Heart right ventricle (tissue), 16 donors: ENCODE measurements at regions of chr2 and their contacts with region 1.

Region 1: GRCh38 chr2:157876066-157876787 is at the start of gene ACVR1:
- DNase-seq: peak; percentile 95 to 97
- ATAC-seq: peak; percentile 94 to 98 (median 97)
- H3K4me3 ChIP-seq: peak within 1 kb of the TSS; percentile 51 to 92 (median 85)
- H3K27ac ChIP-seq: peak within 1 kb of the TSS; percentile 89 to 98 (median 96)
- H3K4me1 ChIP-seq: peaks cover 2 to 47% (median 25%) of the 10 kb centered on the region in 9 donors
- H3K27me3 ChIP-seq: no peaks in the 10 kb centered on the region
- CTCF ChIP-seq: peak in 8 of 9 donors; percentile 28 to 63 (median 47)
- total RNA-seq, gene ACVR1: 15.6 to 32.7 (median 23.0) TPM

Region 2: GRCh38 chr2:157269922-157270321 is 606.3 kb before region 1 on chr2:
- intact Hi-C with region 1: no loop called
- DNase-seq: no peak
- ATAC-seq: no peak
- H3K4me3 ChIP-seq: no peak overlapping the region
- H3K27ac ChIP-seq: no peak overlapping the region
- H3K4me1 ChIP-seq: no peaks in the 10 kb centered on the region
- H3K27me3 ChIP-seq: no peaks in the 10 kb centered on the region
- CTCF ChIP-seq: no peak

Region 3: DNA sequence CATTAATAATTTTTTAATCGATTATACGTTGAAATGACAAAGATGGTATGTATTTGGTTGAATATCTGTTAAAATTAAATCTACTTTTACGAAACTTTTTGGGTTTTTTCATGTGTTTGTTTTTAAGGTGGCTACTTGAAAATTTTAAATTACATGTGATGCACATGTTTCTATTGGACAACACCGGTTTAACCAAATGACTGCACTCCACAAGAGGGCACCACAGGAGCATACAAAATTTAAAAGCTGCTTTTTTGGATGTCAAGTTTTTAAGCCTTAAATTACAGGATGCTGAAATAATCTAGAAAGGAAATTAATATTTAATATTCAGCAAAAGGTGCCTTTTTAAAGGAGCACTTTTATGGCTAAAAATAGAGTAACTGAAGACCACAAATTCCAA is 98.8 kb before region 1 on chr2:
- intact Hi-C with region 1: loop called in 4 of 10 experiments (anchors 2 to 5 kb)
- DNase-seq: peak in 1 of 2 donors; percentile 44
- ATAC-seq: peak in 1 of 8 donors; percentile 44
- H3K4me3 ChIP-seq: no peak overlapping the region
- H3K27ac ChIP-seq: no peak overlapping the region
- H3K4me1 ChIP-seq: peaks cover 5 to 16% (median 11%) of the 10 kb centered on the region in 9 donors
- H3K27me3 ChIP-seq: no peaks in the 10 kb centered on the region
- CTCF ChIP-seq: peak; percentile 47 to 85 (median 72)

Region 4: DNA sequence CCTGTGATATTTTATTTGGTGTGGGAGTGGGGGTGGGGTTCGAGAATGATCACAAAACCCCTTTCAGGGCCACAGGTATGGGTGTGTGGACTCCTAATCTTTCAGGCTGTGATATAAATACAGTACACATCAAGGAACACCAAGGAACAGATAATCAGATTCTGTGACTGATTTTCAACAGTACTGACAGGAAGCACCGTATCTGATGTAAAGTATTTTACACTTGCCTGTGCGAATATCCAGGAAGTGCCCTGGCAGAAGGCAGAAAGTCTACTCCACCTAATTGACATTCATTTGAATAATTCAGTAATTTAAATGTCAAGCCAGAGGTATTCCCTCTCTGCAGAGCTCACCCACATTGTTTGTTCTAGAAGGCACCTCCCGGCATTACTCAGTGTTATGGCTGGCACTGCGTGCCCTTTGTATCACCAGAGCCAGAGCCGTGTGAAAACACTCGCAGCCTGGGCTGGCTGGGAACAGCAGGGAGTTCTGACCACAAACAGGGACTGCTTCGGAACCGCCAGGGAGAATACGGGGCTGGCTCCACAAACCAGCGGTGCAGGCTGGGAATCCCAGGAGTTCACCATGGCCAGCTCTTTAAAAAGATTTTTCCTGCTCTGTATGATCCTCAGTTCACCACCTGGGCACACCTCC is 91.9 kb before region 1 on chr2:
- intact Hi-C with region 1: loop called in 9 of 10 experiments (anchors 2 to 5 kb)
- DNase-seq: peak; percentile 25 to 34
- ATAC-seq: peak; percentile 65 to 83 (median 75)
- H3K4me3 ChIP-seq: peak overlapping the region in 4 of 10 donors; percentile 2 to 23 (median 12)
- H3K27ac ChIP-seq: peak overlapping the region in 9 of 10 donors; percentile 22 to 68 (median 59)
- H3K4me1 ChIP-seq: peaks cover 8 to 82% (median 72%) of the 10 kb centered on the region in 9 donors
- H3K27me3 ChIP-seq: no peaks in the 10 kb centered on the region
- CTCF ChIP-seq: no peak

Region 5: DNA sequence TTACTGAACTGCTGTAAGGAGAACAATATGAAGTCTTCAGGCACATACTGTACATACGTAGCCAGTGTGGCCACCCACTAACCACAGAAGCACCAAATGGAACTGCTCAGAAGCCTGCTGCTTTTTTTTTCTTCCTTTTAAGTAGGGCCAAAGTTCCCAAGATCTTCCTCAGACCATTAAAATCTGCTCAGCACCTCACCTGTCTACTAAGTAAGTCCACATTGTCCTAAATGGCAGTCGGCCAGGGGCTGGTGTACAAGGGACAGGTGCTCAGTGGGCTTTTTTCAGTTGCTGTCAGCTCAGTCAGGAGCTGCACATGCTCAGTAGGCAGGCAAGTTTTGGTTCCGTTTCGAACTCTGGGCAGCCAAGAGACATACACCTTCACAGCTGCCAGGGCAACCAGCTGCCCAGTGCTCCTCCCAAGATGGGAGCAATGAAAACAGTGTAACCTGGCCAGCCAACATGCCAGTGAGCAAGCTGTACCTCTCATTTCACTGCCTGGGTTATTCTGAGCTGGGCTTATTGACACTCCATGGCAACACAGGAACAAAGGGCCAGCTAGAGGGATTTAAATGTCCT is 86.2 kb before region 1 on chr2:
- intact Hi-C with region 1: loop called in 5 of 10 experiments (anchors 2 to 5 kb)
- DNase-seq: peak; percentile 48 to 61
- ATAC-seq: peak; percentile 77 to 98 (median 90)
- H3K4me3 ChIP-seq: no peak overlapping the region
- H3K27ac ChIP-seq: peak overlapping the region; percentile 11 to 88 (median 67)
- H3K4me1 ChIP-seq: peaks cover 4 to 74% (median 61%) of the 10 kb centered on the region in 9 donors
- H3K27me3 ChIP-seq: no peaks in the 10 kb centered on the region
- CTCF ChIP-seq: no peak

Region 6: DNA sequence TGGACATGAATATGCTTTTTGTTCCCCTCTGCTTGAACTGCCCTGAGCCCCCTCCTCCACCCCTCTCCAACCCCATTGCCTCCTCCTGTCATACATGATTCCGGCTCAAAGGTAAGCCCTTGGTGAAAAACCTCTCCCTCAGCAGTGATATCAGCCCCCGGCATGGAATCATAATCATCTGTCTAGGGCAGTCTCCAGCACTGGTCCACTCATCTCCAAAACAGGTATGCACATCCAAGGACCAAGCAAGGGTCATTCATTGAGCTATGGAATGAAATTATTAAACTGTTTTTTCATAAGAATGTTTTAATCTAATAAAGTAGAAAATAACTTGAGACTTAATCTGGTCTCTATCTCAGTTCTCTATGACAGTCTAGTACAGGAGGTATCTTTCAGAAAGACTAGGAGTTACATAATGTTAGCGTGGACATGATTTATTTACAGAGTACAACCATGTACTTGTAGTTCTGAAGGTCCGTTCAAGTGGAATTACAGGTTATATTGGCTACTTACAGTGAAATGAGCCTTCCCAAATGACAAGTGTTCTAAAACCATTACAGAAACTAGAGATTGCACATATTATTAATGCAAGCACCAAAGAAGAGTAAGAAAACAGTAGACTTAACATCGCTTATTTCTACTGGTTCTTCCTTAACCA is 75.3 kb before region 1 on chr2:
- intact Hi-C with region 1: loop called in 1 of 10 experiments (anchors 5 kb)
- DNase-seq: no peak
- ATAC-seq: no peak
- H3K4me3 ChIP-seq: no peak overlapping the region
- H3K27ac ChIP-seq: no peak overlapping the region
- H3K4me1 ChIP-seq: peaks cover 0 to 14% (median 9%) of the 10 kb centered on the region in 9 donors
- H3K27me3 ChIP-seq: no peaks in the 10 kb centered on the region
- CTCF ChIP-seq: no peak

Region 7: DNA sequence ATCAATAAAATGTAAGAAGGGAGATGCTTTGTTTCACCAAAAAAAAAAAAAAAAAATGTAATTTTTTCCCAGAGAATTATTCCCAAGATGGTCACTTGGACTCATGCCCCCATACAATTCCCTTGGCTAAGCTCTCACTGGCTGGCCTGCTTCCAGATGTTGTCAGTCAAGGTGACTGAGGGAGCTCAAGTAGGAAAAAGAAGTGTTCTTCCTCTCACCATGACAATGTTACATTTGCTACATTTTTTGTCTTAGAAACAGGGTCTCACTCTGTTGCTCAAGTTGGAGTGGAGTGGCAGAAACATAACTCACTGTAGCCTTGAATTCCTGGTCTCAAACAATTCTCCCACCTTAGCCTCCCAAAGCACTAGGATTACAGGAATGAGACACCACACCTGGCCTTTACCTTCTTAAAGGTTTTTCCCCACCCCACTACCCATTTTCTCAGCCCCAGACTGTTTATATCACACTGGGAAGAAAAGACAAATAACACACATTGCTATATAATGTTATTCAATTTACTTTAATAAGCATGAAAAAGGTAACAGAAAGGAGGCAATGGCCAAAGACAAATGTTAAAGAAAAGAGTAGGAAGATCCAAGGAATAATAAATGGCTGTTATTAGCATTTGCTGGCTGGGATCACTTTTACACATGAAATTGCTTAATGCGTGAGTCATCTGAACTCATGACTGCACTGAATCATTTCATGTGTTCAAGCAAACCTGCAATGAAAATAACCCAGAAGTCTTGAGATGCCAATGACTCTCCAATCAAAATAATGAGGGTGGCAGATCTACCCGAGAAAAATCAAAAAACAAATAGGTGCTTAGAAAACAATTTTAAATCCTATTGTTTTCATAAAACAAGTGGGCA is 45.3 kb before region 1 on chr2:
- intact Hi-C with region 1: loop called in 4 of 10 experiments (anchors 2 to 5 kb)
- DNase-seq: no peak
- ATAC-seq: peak in 6 of 8 donors; percentile 55 to 86 (median 76)
- H3K4me3 ChIP-seq: no peak overlapping the region
- H3K27ac ChIP-seq: peak overlapping the region in 9 of 10 donors; percentile 17 to 69 (median 54)
- H3K4me1 ChIP-seq: peaks cover 7 to 39% (median 28%) of the 10 kb centered on the region in 9 donors
- H3K27me3 ChIP-seq: no peaks in the 10 kb centered on the region
- CTCF ChIP-seq: no peak

Region 8: DNA sequence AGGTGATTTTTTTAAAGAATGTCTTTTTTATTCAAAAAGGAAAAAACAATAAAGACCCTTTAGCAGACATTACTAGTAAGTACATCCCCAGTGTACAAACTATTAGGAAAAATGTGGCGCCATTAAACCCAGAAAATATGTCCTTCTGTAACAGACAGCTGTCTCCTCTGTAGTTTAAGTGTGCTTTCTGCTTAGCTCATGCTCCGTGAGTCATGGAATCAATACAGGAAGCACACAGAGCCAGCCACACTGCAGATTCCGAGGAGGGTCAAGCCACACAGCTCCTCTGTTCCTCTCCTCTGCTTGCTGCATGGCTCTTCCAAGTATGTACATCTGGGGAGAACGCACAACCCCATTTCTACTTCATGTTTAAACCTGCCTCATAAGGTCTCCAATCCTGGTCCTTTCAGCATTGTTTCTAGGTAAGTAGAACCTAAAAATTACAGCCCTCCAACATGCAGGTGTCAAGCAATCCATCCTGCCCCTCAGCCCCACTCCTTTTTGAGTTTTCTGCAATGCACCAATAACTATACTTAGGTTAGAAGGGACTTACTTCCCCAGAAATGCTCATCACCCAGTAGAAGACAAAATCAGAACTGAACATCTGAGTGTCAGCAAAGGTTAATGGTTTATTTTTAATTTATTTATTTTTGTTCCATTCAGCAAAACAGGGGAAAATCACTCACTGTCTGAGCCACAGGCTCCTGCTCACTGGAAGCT is 37.6 kb before region 1 on chr2:
- intact Hi-C with region 1: loop called in 6 of 10 experiments (anchors 2 to 5 kb)
- DNase-seq: peak; percentile 25 to 54
- ATAC-seq: peak; percentile 67 to 87 (median 78)
- H3K4me3 ChIP-seq: peak overlapping the region in 8 of 10 donors; percentile 1 to 49 (median 42)
- H3K27ac ChIP-seq: peak overlapping the region; percentile 42 to 95 (median 81)
- H3K4me1 ChIP-seq: peaks cover 13 to 84% (median 74%) of the 10 kb centered on the region in 9 donors
- H3K27me3 ChIP-seq: no peaks in the 10 kb centered on the region
- CTCF ChIP-seq: no peak

Region 9: DNA sequence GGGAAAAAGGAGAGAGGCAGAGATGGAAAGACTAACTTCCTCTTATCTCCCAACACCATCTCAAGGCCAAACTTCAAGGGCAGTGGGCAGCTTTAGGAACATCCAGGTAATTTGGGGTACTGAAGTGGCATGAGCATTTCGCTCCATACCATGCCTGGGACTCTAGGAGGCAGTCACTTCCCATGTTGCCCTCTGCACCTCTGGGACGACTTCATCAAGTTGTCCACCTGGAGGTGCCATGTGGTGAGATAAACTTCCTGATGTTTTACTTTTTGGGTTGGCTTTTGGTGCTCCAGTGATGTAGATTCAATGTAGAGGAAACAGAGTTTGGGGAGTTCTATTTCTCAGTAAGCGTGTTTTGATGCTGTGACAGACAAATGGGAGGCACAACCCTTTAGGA is 169.1 kb after region 1 on chr2:
- intact Hi-C with region 1: no loop called
- DNase-seq: no peak
- ATAC-seq: no peak
- H3K4me3 ChIP-seq: no peak overlapping the region
- H3K27ac ChIP-seq: no peak overlapping the region
- H3K4me1 ChIP-seq: peaks cover 0 to 34% (median 13%) of the 10 kb centered on the region in 9 donors
- H3K27me3 ChIP-seq: no peaks in the 10 kb centered on the region
- CTCF ChIP-seq: no peak